SK-N-SH (cell line): ENCODE measurements at regions of chr10 and their contacts with region 1.

Region 1: GRCh38 chr10:64054392-64054791 is 533.2 kb downstream of the REEP3 start:
- DNase-seq: no peak
- H3K4me3 ChIP-seq: no peak overlapping the region
- H3K27ac ChIP-seq: no peak overlapping the region
- H3K4me1 ChIP-seq: no peaks in the 10 kb centered on the region; a peak in 1 of 4 replicates
- H3K27me3 ChIP-seq: no peaks in the 10 kb centered on the region
- CTCF ChIP-seq: no peak
- EP300 ChIP-seq: no peak
- RAD21 ChIP-seq: no peak

Region 2: GRCh38 chr10:64041185-64041988 is 13.0 kb before region 1 on chr10:
- CTCF ChIA-PET with region 1: interaction called, 26 read pairs
- POLR2A ChIA-PET with region 1: no interaction called
- DNase-seq: peak; percentile 65
- H3K4me3 ChIP-seq: peak overlapping the region in 1 of 2 experiments; percentile 56; a peak in 1 of 4 replicates
- H3K27ac ChIP-seq: no peak overlapping the region
- H3K4me1 ChIP-seq: peaks cover 0 to 2% of the 10 kb centered on the region in 2 experiments; a peak in 1 of 4 replicates
- H3K27me3 ChIP-seq: peaks cover 7% of the 10 kb centered on the region; the same call in 1 of the 2 replicates
- CTCF ChIP-seq: peak; percentile 99
- EP300 ChIP-seq: no peak
- RAD21 ChIP-seq: peak; percentile 100

Region 3: DNA sequence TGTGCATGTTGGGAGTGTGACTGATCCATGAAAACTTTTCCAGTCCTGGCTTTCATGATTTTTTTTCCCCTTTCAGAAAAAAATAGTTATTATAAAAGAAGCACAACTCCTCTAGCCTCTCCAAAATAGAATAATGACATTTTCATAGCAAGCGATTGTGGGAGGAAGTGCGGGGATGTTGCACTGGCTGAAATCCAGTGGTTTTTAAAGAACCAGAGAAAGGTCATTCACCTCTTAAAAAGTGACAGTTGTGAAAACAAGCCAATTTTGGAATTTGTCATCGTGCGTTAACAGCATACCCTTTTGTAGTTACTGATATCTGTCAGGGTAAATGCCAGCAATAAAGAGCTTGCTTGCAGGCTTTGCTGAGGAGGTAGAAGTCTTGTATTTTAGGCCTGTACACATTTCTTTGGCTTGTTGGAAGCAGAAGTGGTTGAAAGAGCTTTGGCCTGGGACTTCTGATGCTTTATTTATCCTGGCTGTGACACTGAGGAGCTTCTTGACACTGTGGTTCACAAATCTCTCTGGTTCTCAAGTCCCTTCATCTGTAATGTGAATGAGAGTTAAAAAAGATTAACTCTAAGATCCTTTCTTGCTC is 12.7 kb after region 1 on chr10:
- CTCF ChIA-PET with region 1: no interaction called
- POLR2A ChIA-PET with region 1: no interaction called
- DNase-seq: no peak
- H3K4me3 ChIP-seq: no peak overlapping the region
- H3K27ac ChIP-seq: no peak overlapping the region
- H3K4me1 ChIP-seq: no peaks in the 10 kb centered on the region
- H3K27me3 ChIP-seq: no peaks in the 10 kb centered on the region
- CTCF ChIP-seq: no peak
- EP300 ChIP-seq: no peak
- RAD21 ChIP-seq: no peak